ENCODE measurements at regions of chr14 and their contacts with region 1.

Region 1: DNA sequence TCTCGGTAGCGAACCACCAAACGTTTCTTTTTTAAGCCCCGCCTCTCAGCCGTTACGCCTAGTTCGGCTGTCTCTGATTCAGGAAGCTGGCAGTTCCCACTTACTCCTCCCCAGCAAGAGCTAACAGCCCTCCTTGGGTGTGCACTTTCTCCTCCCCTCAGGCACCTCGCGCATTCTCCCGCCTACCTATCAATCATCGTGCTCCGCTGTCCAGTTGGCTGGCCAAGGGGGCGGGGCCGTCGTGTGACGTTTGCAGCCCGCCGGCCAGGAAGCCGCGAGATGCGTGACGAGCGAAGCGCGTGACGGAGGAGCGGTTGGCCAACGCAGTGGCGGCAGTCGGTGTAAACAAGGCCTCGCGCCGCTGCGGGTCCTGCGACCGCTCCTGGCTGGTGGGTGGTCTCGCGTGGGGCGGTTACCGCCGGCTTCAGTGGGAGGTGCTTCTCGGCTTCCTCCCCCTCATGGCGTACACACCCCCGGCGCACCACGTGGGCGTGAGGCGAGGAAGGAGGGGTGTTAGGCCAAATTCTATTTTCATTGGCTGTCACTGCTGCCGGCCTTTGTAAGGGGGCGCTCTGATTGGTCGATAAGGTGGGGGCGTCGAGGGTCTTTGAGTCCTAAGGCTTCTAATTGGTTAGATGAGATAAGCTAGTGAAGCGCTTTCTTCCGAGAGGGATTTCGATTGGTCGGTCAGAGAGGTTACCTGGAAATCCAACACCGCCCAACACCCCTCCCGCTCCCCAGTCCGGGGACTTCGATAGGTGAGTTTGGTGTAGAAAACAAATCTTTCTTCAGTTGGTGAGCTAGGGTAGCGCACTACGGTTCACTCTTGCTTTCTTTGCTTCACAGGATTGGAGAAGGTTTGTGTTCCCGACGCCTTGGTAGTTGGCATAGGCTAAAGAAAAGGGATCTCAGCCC is at the starts of genes DCAF11 and NRL:
- DNase-seq: peak; percentile 98
- H3K4me3 Mint-ChIP-seq: peak within 1 kb of the TSS; percentile 99
- H3K27ac Mint-ChIP-seq: peak within 1 kb of the TSS; percentile 98
- H3K4me1 Mint-ChIP-seq: peaks cover 34% of the 10 kb centered on the region
- H3K27me3 Mint-ChIP-seq: no peaks in the 10 kb centered on the region
- total RNA-seq, gene DCAF11: 69.9 and 71.6 TPM in 2 replicates
- total RNA-seq, gene NRL: 2.1 and 2.7 TPM in 2 replicates

Region 2: GRCh38 chr14:23829736-23830502 is 284.9 kb before region 1 on chr14:
- intact Hi-C with region 1: no loop called
- DNase-seq: no peak
- H3K4me3 Mint-ChIP-seq: no peak overlapping the region
- H3K27ac Mint-ChIP-seq: no peak overlapping the region
- H3K4me1 Mint-ChIP-seq: no peaks in the 10 kb centered on the region
- H3K27me3 Mint-ChIP-seq: peaks cover 1% of the 10 kb centered on the region

Region 3: GRCh38 chr14:23984891-23985602 is 129.7 kb before region 1 on chr14:
- intact Hi-C with region 1: loop called (anchors 1 kb)
- DNase-seq: no peak
- H3K4me3 Mint-ChIP-seq: no peak overlapping the region
- H3K27ac Mint-ChIP-seq: no peak overlapping the region
- H3K4me1 Mint-ChIP-seq: peaks cover 25% of the 10 kb centered on the region
- H3K27me3 Mint-ChIP-seq: no peaks in the 10 kb centered on the region

Region 4: GRCh38 chr14:24080888-24081738 is 33.7 kb before region 1 on chr14:
- intact Hi-C with region 1: loop called (anchors 1 kb)
- DNase-seq: peak; percentile 71
- H3K4me3 Mint-ChIP-seq: peak overlapping the region; percentile 81
- H3K27ac Mint-ChIP-seq: peak overlapping the region; percentile 50
- H3K4me1 Mint-ChIP-seq: peaks cover 17% of the 10 kb centered on the region
- H3K27me3 Mint-ChIP-seq: peaks cover 8% of the 10 kb centered on the region

Region 5: GRCh38 chr14:24146978-24147760 is 32.4 kb after region 1 on chr14 and contains the start of gene RNF31:
- intact Hi-C with region 1: loop called (anchors 1 kb)
- DNase-seq: peak; percentile 97
- H3K4me3 Mint-ChIP-seq: peak within 1 kb of the TSS; percentile 94
- H3K27ac Mint-ChIP-seq: peak within 1 kb of the TSS; percentile 98
- H3K4me1 Mint-ChIP-seq: peaks cover 62% of the 10 kb centered on the region
- H3K27me3 Mint-ChIP-seq: no peaks in the 10 kb centered on the region
- total RNA-seq, gene RNF31: 115 and 129 TPM in 2 replicates

Region 6: DNA sequence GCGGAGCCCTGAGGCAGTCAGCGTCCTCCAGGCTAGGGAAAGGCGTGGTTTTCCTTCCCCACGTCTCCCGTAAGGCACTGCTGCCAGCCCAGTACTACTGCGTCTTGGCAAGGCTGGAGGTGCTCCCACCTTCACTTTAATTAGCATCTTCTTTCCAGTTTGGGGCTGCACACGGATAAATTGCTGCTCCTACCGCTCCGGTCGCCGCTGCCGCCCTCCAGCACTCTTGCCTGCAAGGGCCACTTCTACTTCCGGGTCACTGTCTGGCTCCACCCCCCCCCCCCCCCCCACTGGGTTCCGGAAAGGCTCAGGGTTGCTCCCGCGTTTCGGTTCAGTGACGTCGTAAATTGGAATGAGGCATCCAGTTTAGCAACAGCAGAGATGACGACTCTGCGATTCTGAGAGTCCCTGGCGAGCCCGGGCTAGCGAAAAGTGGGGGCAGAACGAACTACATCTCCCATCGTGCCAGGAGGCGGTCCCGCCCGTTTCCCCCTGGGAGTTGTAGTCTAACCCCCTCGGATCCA is 117.4 kb after region 1 on chr14 and contains the start of gene NEDD8:
- intact Hi-C with region 1: loop called (anchors 1 kb)
- DNase-seq: peak; percentile 84
- H3K4me3 Mint-ChIP-seq: peak within 1 kb of the TSS; percentile 93
- H3K27ac Mint-ChIP-seq: peak within 1 kb of the TSS; percentile 91
- H3K4me1 Mint-ChIP-seq: peaks cover 50% of the 10 kb centered on the region
- H3K27me3 Mint-ChIP-seq: no peaks in the 10 kb centered on the region
- total RNA-seq, gene NEDD8: 177 and 185 TPM in 2 replicates